ENCODE measurements at regions of chr2 and their contacts with region 1.

Region 1: DNA sequence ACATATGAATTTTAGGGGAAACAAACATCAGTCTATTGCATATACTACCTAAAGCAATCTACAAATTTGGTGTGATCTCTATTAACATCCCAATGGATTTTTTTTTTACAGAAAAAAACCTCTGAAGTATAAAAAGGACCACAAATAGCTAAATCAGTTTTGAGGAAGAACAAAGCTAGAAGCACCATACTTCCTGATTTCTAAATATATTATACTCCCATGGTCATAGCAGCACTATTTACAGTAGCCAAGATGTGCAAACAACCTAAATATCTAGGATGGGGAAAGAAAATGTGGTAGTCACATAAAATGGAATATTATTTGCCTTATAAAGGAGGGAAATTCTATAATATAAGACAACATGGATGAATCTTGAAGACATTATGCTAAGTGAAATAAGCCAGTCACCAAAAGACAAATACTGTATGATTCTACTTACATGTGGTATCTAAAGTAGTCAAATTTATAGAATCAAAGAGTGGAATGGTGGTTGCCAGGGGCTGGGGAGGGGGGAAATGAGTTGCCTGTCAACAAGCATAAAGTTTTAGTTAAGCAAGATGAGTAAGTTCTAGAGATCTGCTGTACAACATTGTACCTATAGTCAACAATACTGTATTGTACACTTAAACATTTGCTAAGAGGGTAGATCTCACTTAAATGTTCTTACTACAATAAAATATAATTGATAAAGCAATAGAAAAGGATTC is 17.6 kb upstream of the CASP8 start:
- DNase-seq: no peak
- H3K4me3 ChIP-seq: no peak overlapping the region
- H3K27ac ChIP-seq: peak overlapping the region in 4 of 8 donors; percentile 22 to 49 (median 30)
- H3K4me1 ChIP-seq: peaks cover 4 to 95% (median 51%) of the 10 kb centered on the region in 6 donors
- H3K27me3 ChIP-seq: no peaks in the 10 kb centered on the region
- CTCF ChIP-seq: no peak
- POLR2A ChIP-seq: no peak

Region 2: GRCh38 chr2:201363857-201364560 is 121.3 kb after region 1 on chr2:
- intact Hi-C with region 1: loop called (anchors 5 kb)
- DNase-seq: no peak
- H3K4me3 ChIP-seq: no peak overlapping the region
- H3K27ac ChIP-seq: no peak overlapping the region
- H3K4me1 ChIP-seq: peaks cover 0 to 5% (median 0%) of the 10 kb centered on the region in 6 donors
- H3K27me3 ChIP-seq: no peaks in the 10 kb centered on the region
- CTCF ChIP-seq: peak; percentile 72 to 90 (median 83)
- POLR2A ChIP-seq: no peak

Measured in spleen (tissue), 13 donors.